ENCODE measurements at regions of chr12 and their contacts with region 1.

Region 1: GRCh38 chr12:6355491-6356371 is 13.9 kb upstream of the TNFRSF1A start:
- DNase-seq: peak; percentile 89 to 92 (median 91)
- H3K4me3 ChIP-seq: no peak overlapping the region
- H3K4me3 Mint-ChIP-seq: no peak overlapping the region
- H3K27ac ChIP-seq: peak overlapping the region in 1 of 2 donors; percentile 76
- H3K27ac Mint-ChIP-seq: peak overlapping the region; percentile 77 to 95 (median 88)
- H3K4me1 ChIP-seq: peaks cover 76 to 83% of the 10 kb centered on the region in 2 donors
- H3K4me1 Mint-ChIP-seq: peaks cover 86% of the 10 kb centered on the region
- H3K27me3 ChIP-seq: no peaks in the 10 kb centered on the region
- H3K27me3 Mint-ChIP-seq: peaks cover 0 to 6% (median 0%) of the 10 kb centered on the region in 3 donors
- CTCF ChIP-seq: no peak

Region 2: DNA sequence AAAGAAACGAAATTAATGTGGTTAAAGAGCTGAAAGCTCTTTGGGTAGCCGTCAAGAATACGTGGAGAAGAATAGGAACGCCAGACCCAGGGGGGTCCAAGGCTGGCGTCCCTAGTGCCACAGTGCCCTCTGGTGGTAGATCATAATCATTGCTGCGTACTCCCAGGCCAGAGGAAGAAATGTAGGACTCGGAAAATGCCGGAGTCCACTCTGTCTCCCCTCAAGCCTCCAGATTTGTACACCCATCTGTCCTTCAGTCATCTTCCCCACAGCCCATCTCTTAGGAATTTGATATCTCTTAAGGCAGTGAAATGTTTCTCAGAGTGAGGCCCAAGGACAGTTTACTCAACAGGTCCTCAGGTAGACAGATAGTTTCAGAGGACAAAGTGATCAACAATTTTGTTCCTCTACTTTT is 70.7 kb before region 1 on chr12:
- intact Hi-C with region 1: no loop called
- DNase-seq: peak; percentile 46 to 70 (median 67)
- H3K4me3 ChIP-seq: no peak overlapping the region
- H3K4me3 Mint-ChIP-seq: no peak overlapping the region
- H3K27ac ChIP-seq: no peak overlapping the region
- H3K27ac Mint-ChIP-seq: peak overlapping the region in 2 of 7 donors; percentile 73 to 74
- H3K4me1 ChIP-seq: no peaks in the 10 kb centered on the region
- H3K4me1 Mint-ChIP-seq: peaks cover 4% of the 10 kb centered on the region
- H3K27me3 ChIP-seq: peaks cover 0 to 4% of the 10 kb centered on the region in 2 donors
- H3K27me3 Mint-ChIP-seq: peaks cover 8 to 21% (median 12%) of the 10 kb centered on the region in 3 donors
- CTCF ChIP-seq: peak; percentile 98

Region 3: DNA sequence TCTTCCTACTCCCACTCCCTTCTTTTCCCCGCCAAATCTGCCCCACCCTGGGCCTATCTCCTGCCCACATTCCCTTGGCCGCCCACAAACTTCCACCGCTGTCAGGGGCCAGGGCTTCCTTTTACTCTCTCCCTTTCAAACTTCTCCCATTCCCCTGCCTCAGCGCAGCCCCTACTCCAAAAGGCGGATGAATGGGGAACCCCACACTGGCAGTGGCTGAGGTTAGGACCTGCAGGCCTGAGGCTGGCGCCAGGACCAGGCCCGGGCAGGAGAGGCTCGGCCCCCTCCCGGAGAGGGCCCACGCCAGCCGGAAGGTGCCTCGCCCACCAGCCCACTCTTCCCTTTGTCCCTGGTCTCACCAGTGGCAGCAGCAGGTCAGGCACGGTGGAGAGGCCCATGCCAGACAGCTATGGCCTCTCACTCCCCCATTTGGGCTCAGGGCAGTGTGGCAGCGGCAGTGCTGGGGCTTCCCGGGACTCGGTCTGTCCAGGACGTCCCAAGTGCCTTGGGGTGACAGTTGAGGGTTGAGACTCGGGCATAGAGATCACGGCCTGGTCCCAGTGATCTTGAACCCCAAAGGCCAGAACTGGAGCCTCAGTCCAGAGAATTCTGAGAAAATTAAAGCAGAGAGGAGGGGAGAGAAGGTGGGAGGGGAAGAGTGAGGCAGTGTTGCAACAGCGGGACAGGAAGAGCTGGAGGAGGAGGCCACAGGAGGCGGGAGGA is 14.2 kb before region 1 on chr12 and contains the start of gene TNFRSF1A:
- intact Hi-C with region 1: loop called in 1 of 2 experiments (anchors 2 kb)
- DNase-seq: peak; percentile 63 to 71 (median 69)
- H3K4me3 ChIP-seq: peak within 1 kb of the TSS; percentile 74 to 95 (median 90)
- H3K4me3 Mint-ChIP-seq: no peak within 1 kb of the TSS
- H3K27ac ChIP-seq: peak within 1 kb of the TSS; percentile 90 to 93
- H3K27ac Mint-ChIP-seq: peak within 1 kb of the TSS in 1 of 7 donors; percentile 75
- H3K4me1 ChIP-seq: peaks cover 74 to 83% of the 10 kb centered on the region in 2 donors
- H3K4me1 Mint-ChIP-seq: peaks cover 43% of the 10 kb centered on the region
- H3K27me3 ChIP-seq: no peaks in the 10 kb centered on the region
- H3K27me3 Mint-ChIP-seq: peaks cover 0 to 12% (median 0%) of the 10 kb centered on the region in 3 donors
- CTCF ChIP-seq: no peak
- polyA plus RNA-seq, gene TNFRSF1A: 108 to 157 (median 152) TPM